GM10248 (cell line): ENCODE measurements at regions of chr19 and their contacts with region 1.

Region 1: DNA sequence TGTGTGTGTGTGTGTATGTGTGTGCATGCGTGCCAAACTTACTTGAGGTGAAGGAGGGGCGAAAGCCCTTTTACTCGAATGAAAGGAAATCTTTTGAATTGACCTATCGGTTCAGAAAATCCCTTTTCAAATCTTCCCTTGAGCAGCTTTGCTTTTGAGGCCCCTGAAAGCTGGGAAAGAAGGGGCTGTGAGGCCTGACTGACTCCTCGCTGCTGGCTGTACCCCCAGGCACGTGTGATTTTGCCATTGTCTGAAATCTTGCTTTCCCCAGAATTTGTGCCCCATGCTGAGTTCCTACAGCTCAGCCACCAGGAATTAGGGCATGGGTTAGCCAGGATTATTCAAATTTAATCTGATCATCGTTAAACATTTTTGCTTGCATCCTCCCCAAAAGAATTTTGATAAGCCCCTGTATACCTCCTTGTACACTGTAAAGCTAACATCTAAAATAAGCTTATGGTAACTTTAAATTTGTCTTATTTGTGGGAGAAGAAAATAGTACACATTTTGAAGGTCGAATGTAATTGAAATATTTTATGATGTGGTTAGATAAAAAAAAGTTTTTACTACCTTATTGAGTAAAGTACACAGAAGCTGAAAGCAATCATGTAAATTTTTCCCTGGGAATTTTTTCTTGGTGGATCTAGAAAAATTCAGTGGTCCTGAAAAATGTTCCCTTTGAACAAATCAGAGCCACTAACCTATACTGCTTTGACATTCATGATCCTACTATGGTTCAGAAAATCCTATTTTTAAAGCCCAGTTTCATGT is 46.7 kb downstream of the SIPA1L3 start:
- DNase-seq: no peak
- CTCF ChIP-seq: no peak

Region 2: DNA sequence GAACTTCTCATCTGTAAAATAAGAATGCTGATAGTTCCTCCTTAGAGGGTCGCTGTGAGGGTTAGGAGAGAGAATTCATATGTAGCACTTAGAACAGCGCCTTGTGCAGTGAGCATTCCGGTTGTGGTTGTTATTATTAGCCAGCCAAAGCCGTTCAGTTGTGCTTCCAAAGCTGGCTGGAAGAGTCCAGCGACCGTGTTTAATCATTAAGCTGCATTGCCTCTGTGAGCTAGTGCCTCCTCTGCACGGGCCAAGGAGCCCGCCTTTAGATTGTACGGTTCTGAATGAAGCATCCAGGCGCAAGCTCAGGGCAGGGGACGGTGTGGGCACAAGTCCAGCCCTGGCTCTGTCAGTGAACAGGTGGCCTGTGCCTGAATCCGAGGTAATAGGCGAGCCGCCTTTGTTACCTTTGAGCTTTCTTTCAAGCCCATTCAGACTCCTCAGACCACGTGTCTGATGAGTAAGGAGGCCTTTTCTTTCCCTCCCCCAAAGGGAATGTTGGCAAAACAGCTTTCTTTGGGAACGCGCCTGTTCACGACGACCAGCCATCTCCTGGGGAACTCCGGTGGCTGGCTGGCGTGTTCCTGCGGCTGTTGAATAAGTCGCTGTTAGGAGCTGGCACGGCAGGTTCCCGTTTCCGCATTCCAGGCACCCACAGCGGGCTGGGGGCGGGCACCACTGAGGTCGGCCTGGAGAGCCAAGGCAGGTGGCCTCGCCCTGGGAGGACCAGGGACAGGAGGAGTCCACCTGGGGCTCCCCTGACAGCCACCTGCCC is 21.6 kb before region 1 on chr19:
- CTCF ChIA-PET with region 1: interaction called, 10 read pairs
- POLR2A ChIA-PET with region 1: interaction called, 5 read pairs
- DNase-seq: peak; percentile 62
- CTCF ChIP-seq: no peak

Region 3: DNA sequence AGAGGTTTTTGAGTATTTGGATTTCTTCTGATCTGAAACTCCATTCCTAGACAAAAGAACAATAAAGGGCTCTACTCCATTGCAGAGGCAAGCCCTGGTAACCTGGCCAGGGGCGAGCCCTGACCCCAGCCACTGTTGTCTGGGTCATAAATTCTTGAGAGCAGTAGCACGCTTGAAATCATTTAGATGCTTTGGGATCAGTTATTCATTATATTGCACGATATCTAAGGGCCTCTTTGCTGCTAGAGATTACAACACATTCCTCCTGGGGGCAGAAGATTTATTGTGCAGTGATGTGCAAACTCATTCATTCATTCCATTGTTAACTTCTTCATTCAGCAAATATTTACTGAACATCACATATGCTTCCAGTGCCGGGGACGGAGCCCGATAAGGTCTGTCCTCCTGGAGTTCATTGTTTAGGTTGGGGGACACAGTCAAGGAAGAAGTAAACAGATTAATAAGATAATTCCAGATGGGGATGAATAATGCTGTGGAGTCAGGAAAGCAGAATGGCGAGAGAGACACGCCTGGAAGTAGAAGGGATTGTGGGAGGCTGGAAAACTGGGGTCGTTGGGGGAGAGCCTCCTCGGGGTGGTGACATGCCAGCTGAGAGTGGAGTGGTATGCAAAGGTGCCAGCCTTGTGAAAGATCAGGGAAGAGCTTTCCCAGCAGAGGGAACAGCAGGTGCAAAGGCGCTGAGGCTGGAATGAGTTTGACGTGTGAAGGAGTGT is 11.8 kb before region 1 on chr19:
- CTCF ChIA-PET with region 1: interaction called, 10 read pairs
- POLR2A ChIA-PET with region 1: no interaction called
- DNase-seq: no peak
- CTCF ChIP-seq: no peak